Activated CD8-positive, alpha-beta T cell treated with anti-CD3 and anti-CD28 coated beads for 36 hours (primary cell): ENCODE measurements at regions of chr2 and their contacts with region 1.

Region 1: DNA sequence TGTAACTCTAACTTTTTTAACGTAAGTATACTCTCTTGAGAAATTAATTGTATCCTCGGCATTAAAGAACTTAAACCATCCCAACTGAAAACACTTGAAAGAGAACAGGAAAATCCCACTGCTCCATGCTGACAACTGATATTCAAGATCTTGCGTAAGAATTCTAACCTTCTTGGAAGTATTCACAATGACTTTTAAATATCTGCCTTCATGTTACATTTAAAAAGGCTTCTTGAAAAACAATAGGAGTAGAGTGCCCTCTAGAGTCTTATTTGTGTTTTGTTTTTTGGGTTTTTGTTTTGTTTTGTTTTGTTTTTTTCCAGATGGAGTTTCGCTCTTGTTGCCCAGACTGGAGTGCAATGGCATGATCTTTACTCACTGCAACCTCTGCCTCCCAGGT is 65.4 kb upstream of the DNAJC10 start:
- DNase-seq: no peak
- ATAC-seq: no peak
- H3K4me3 Mint-ChIP-seq: no peak overlapping the region
- H3K27ac Mint-ChIP-seq: no peak overlapping the region
- H3K4me1 Mint-ChIP-seq: no peaks in the 10 kb centered on the region
- H3K27me3 Mint-ChIP-seq: peaks cover 4% of the 10 kb centered on the region
- CTCF ChIP-seq: peak; percentile 42

Region 2: DNA sequence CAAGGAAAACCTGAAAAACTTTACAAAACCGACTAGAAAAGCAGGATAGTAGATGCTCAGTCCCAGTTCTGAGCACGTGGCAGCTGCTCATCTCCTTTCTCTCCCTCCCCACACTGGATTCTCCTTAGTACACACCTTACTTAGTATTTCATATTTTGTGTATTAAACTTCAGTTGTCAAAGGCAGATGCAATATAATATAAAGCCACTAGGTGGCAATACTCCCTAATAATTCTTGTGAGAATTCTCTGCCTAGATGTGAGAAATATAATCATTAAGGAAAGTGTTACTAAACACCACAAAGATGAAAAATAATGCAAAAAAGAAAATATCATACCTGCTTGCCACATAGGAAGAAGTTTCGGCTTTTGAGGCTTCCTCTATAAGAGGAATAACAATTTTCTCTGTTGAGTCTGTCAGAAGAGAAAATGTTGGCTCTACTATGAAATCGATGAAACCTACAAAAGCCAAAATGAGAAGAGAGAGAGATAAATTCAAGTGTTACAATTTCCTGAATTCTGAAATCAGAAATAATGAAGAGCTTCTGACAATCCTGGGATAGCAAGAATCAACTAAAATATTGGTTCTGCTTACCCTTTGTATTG is 464.5 kb before region 1 on chr2:
- CTCF ChIA-PET with region 1: interaction called, 18 read pairs
- POLR2A ChIA-PET with region 1: no interaction called
- intact Hi-C with region 1: loop called (anchors 2 kb)
- DNase-seq: no peak
- ATAC-seq: no peak
- H3K4me3 Mint-ChIP-seq: no peak overlapping the region
- H3K27ac Mint-ChIP-seq: no peak overlapping the region
- H3K4me1 Mint-ChIP-seq: no peaks in the 10 kb centered on the region
- H3K27me3 Mint-ChIP-seq: peaks cover 7% of the 10 kb centered on the region
- CTCF ChIP-seq: peak; percentile 68

Region 3: GRCh38 chr2:182680837-182681236 is 30.1 kb after region 1 on chr2:
- CTCF ChIA-PET with region 1: no interaction called
- POLR2A ChIA-PET with region 1: no interaction called
- intact Hi-C with region 1: no loop called
- DNase-seq: no peak
- ATAC-seq: no peak
- H3K4me3 Mint-ChIP-seq: no peak overlapping the region
- H3K27ac Mint-ChIP-seq: no peak overlapping the region
- H3K4me1 Mint-ChIP-seq: no peaks in the 10 kb centered on the region
- H3K27me3 Mint-ChIP-seq: peaks cover 17% of the 10 kb centered on the region
- CTCF ChIP-seq: no peak

Region 4: DNA sequence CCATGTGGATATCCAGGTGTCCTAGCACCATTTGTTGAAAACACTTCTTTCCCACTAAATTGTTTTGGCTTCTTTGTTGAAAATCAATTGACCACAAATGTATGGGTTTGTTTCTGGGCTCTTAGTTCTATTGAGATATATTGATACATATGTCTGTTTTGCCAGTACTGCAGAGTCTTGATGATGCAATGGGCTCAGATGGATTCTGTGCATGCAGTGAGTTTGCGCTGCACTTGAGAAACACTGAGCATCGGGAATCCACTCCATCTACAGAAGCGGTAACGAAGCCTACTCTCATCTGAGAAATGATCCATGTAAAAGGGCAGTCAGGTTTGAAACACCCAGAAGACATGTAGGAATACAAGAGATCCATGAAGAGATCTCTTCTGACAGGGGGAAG is 43.5 kb after region 1 on chr2:
- CTCF ChIA-PET with region 1: no interaction called
- POLR2A ChIA-PET with region 1: no interaction called
- intact Hi-C with region 1: no loop called
- DNase-seq: no peak
- ATAC-seq: no peak
- H3K4me3 Mint-ChIP-seq: no peak overlapping the region
- H3K27ac Mint-ChIP-seq: no peak overlapping the region
- H3K4me1 Mint-ChIP-seq: no peaks in the 10 kb centered on the region
- H3K27me3 Mint-ChIP-seq: peaks cover 11% of the 10 kb centered on the region
- CTCF ChIP-seq: no peak